ENCODE measurements at regions of chr7 and their contacts with region 1.

Region 1: DNA sequence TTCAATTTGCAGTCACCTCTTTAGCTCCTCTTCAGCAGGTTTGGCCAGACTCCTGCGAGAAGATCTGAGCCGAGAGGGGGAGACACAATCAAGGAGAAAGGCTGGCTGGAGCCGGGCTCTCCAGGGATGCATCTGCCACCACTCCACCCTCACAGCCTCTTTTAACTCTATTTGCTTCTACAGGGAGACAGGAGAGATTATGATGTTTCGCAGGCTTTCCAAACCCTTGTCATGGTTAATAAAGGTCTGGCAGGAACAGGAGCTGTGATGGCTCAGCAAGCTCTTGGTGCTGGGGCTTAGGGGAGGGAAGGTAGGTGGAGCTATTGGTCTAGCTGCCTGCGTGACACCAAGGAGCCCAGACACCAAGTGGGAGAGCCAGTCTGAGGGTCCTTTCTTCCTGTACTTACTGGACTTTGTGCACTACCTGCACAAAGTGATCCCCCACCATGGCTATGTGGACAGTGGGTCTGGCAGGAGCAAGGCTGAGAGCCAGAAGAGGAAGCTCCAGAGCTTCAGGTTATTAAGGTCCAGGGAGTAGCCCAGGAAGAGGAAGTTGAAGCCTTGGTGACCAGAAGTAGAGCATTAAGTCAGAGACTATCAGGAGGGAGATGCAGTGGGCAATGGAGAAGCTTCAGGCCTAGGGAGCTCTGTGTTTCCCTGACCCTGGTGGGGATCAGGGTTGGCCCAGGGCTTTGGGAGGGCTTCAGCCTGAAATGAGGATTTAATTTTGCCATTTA is 448.3 kb upstream of the PODXL start:
- DNase-seq: peak in 3 of 5 donors; percentile 21 to 43 (median 41)
- ATAC-seq: peak; percentile 71 to 90 (median 88)
- H3K4me3 ChIP-seq: no peak overlapping the region
- H3K27ac ChIP-seq: no peak overlapping the region
- H3K4me1 ChIP-seq: peaks cover 0 to 2% (median 0%) of the 10 kb centered on the region in 12 donors
- H3K27me3 ChIP-seq: no peaks in the 10 kb centered on the region
- CTCF ChIP-seq: peak in 11 of 12 donors; percentile 15 to 57 (median 46)
- POLR2A ChIP-seq: no peak

Region 2: DNA sequence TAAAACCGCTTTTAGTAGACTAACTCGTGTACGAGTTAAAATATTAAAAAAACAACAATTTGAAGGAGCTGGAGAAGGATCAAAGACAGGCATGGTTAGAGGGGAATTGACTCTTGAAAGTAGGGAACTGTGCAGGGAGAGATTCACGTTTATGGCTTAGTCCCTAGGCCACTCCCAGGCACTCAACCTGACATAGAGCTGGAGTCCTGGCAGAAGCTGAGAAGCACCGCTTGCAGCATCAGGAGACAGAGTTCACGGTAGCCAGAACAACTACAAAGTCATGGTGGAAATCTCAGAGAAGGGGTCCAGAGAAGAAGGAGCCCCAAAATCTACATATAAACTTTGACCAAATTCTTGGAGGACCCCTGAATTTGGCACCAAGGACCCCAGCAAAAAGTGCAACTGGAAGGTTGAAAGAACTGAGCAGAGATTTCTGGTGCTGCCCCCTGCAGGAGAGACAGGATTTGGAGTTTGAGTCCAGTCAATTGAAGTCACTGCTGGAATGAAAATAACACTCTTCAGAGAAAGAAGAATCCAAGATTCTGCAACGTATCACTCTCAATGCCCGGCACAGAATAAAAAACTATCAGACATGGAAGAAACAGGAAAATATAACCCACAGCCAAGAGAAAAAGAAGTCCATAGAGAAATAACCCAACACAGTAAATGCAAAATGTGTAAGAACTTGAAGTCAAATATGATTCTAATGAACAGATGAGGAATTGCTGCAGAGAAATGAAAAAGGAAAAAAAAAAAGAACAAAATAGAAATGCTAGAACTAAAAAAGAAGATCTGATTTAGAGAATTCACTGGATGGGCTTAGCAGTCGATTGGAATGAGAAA is 45.0 kb after region 1 on chr7:
- intact Hi-C with region 1: loop called in 2 of 10 experiments (anchors 1 to 2 kb)
- DNase-seq: no peak
- ATAC-seq: no peak
- H3K4me3 ChIP-seq: no peak overlapping the region
- H3K27ac ChIP-seq: no peak overlapping the region
- H3K4me1 ChIP-seq: peaks cover 0 to under 1% (median 0%) of the 10 kb centered on the region in 12 donors
- H3K27me3 ChIP-seq: peaks cover 0 to 5% (median 0%) of the 10 kb centered on the region in 9 donors
- CTCF ChIP-seq: peak; percentile 50 to 67 (median 56)
- POLR2A ChIP-seq: no peak

Region 3: GRCh38 chr7:132160611-132161532 is 156.2 kb after region 1 on chr7:
- intact Hi-C with region 1: loop called in 1 of 10 experiments (anchors 10 kb)
- DNase-seq: peak; percentile 58 to 81 (median 71)
- ATAC-seq: peak; percentile 69 to 90 (median 82)
- H3K4me3 ChIP-seq: no peak overlapping the region
- H3K27ac ChIP-seq: peak overlapping the region in 5 of 12 donors; percentile 12 to 65 (median 43)
- H3K4me1 ChIP-seq: peaks cover 0 to 22% (median 10%) of the 10 kb centered on the region in 12 donors
- H3K27me3 ChIP-seq: no peaks in the 10 kb centered on the region
- CTCF ChIP-seq: no peak
- POLR2A ChIP-seq: no peak

Region 4: GRCh38 chr7:132249614-132249972 is 244.9 kb after region 1 on chr7:
- intact Hi-C with region 1: loop called in 6 of 10 experiments (anchors 5 to 10 kb)
- DNase-seq: no peak
- ATAC-seq: peak in 2 of 4 donors; percentile 61 to 62
- H3K4me3 ChIP-seq: no peak overlapping the region
- H3K27ac ChIP-seq: no peak overlapping the region
- H3K4me1 ChIP-seq: peaks cover 0 to 28% (median 10%) of the 10 kb centered on the region in 12 donors
- H3K27me3 ChIP-seq: no peaks in the 10 kb centered on the region
- CTCF ChIP-seq: peak in 8 of 12 donors; percentile 6 to 36 (median 24)
- POLR2A ChIP-seq: no peak